ENCODE measurements at regions of chr10 and their contacts with region 1.

Region 1: DNA sequence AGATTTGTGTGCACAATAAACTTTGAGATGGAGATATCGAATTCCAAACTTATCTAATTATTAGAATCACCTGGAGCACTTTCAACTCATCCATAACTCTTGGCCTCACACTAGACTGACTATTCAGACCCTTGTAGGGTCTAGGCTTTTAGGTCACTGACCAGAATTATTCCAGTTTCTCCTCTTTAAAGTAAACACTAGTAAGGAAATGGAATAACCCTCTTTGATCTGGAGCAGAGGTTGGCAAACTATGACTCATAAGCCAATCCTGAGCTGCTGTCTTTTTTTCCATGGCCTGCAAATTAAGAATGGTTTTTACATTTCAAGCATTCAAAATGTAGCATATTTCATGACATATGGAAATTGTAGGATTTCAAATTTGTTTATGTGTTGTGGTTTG is 1601.9 kb downstream of the REEP3 start:
- DNase-seq: peak; percentile 86
- ATAC-seq: peak; percentile 96
- H3K4me3 ChIP-seq: no peak overlapping the region
- H3K27ac ChIP-seq: peak overlapping the region; percentile 44
- H3K4me1 ChIP-seq: peaks cover 17% of the 10 kb centered on the region
- H3K27me3 ChIP-seq: no peaks in the 10 kb centered on the region
- CTCF ChIP-seq: no peak

Region 2: GRCh38 chr10:65090991-65091390 is 32.1 kb before region 1 on chr10:
- CTCF ChIA-PET with region 1: no interaction called
- POLR2A ChIA-PET with region 1: no interaction called
- intact Hi-C with region 1: loop called (anchors 1 kb)
- DNase-seq: no peak
- ATAC-seq: peak; percentile 98
- H3K4me3 ChIP-seq: no peak overlapping the region
- H3K27ac ChIP-seq: no peak overlapping the region
- H3K4me1 ChIP-seq: no peaks in the 10 kb centered on the region
- H3K27me3 ChIP-seq: no peaks in the 10 kb centered on the region
- CTCF ChIP-seq: no peak

Region 3: GRCh38 chr10:65275296-65275695 is 152.2 kb after region 1 on chr10:
- CTCF ChIA-PET with region 1: no interaction called
- POLR2A ChIA-PET with region 1: no interaction called
- intact Hi-C with region 1: loop called (anchors 10 kb)
- DNase-seq: peak; percentile 97
- ATAC-seq: peak; percentile 100
- H3K4me3 ChIP-seq: no peak overlapping the region
- H3K27ac ChIP-seq: peak overlapping the region; percentile 0; the same call in 1 of the 2 replicates
- H3K4me1 ChIP-seq: peaks cover 16% of the 10 kb centered on the region
- H3K27me3 ChIP-seq: no peaks in the 10 kb centered on the region
- CTCF ChIP-seq: no peak

Region 4: DNA sequence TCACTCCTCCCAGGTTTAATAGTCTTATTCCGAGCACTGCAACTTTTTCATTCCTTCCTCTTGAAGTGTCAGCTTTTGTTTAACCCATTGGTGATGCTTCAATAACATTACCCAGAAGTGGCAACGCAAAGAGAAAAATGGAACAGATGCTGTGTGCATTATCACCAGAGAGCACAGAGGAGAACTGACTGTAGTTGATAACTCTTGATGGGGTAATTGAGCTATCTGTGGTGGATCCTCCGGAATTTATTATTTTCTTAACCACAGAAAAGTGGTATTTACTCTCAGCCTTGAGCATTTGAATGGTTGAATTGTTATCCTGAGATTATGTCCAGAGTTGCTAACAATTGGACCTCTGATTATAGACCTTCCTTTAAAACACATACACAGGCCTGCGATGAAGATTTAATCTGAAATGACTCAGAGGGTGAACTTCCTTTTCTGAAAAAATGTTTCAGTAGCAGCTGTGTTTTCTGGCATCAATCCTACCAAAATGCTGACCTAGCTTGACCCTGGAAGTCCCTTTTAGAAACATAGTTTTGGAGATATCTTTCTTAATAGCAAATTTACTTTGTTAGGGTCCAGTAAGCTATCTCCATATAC is 218.3 kb after region 1 on chr10:
- CTCF ChIA-PET with region 1: no interaction called
- POLR2A ChIA-PET with region 1: no interaction called
- intact Hi-C with region 1: loop called (anchors 5 kb)
- DNase-seq: peak; percentile 90
- ATAC-seq: peak; percentile 90
- H3K4me3 ChIP-seq: no peak overlapping the region
- H3K27ac ChIP-seq: peak overlapping the region; percentile 29
- H3K4me1 ChIP-seq: peaks cover 27% of the 10 kb centered on the region
- H3K27me3 ChIP-seq: no peaks in the 10 kb centered on the region
- CTCF ChIP-seq: no peak

Measured in PC-3 (cell line).